Activated CD4-positive, alpha-beta T cell treated with anti-CD3 and anti-CD28 coated beads, Interleukin-2, amount 10 ng/mL, durations not matched to agents 7 days and 5 days (primary cell): ENCODE measurements at regions of chr2 and their contacts with region 1.

Region 1: DNA sequence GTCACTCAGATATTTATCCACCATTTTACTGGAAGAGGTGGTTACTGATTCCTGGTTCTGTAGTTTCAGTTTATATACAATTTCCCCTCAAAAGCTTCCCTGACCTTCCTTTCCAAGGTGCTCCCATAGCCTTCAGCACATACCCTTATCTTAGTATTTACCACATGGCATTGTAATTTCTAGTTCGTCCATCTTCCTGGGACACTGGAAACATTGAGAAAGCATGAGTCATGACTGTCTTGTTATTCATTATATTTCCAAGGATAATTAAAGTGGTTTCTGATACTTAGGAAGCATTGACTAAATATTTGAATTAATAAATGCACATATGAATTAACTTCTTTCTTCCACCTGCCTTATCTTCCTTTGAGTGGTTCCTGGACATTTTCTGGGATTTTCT is 203.8 kb downstream of the ETAA1 start:
- DNase-seq: no peak
- H3K4me3 Mint-ChIP-seq: no peak overlapping the region
- H3K27ac Mint-ChIP-seq: no peak overlapping the region
- H3K4me1 Mint-ChIP-seq: no peaks in the 10 kb centered on the region
- H3K27me3 Mint-ChIP-seq: no peaks in the 10 kb centered on the region

Region 2: DNA sequence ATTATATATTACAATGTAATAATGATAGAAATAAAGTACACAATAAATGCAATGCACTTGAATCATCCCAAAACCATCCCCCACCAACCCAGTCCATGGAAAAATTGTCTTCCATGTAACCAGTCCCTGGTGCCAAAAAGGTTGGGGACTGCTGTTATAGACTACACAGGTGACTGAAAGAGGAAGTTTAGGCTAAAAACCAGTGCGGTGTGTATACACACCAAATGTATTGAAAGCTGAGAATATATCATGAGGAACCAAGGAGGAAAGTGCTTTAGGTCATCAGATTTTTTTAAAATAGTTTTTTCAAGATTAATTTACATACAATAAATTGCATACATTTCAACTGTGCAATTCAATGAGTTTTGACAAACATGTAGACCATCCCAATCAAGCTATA is 482.4 kb after region 1 on chr2:
- CTCF ChIA-PET with region 1: no interaction called
- POLR2A ChIA-PET with region 1: interaction called, 10 read pairs
- DNase-seq: no peak
- H3K4me3 Mint-ChIP-seq: no peak overlapping the region
- H3K27ac Mint-ChIP-seq: no peak overlapping the region
- H3K4me1 Mint-ChIP-seq: no peaks in the 10 kb centered on the region
- H3K27me3 Mint-ChIP-seq: peaks cover 8% of the 10 kb centered on the region

Region 3: DNA sequence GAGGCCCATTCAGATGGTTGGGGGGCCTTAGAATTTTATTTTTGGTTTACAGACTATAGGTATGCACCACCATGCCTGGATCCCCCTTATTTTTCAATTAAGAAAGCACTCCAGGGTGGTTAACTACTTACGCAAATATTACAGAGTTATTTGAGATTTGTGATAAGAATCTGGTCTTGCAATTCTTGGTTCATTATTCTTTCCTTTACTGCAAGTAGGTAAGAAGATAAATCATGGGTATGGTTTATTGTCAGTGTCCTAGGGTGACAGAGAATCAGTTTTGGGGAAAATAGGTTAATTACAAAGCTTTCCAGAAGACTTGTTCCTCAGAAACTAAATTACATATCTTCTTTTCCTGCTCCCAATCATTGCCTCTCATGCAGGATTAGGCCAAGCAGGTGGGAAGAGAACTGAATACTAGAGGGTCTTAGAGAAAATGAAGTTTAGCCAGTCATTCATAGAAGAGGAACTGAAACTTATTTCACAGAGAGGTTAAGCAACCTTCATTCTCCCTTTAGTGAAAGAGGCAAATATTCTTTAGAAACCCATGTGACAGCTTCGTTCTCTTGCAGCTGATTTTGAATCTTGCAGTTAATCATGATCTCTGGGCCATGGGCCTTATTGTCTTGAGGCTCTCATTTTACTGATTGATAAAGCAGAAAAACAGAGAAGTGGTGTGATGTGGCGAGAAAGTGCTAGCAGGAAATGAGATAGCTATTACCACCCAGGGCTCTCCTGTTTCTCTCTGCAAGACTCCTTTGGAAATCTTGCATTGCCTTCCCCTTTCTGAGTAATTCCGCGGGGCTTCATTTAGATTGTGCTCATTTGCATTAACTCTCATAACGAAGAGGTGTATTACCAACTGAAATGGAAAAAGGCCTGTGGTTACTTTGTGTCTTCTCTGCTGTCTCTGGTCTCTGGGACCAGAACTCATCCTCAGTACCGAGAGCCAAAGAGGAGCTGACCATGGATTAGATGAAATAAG is 1088.9 kb after region 1 on chr2:
- CTCF ChIA-PET with region 1: no interaction called
- POLR2A ChIA-PET with region 1: no interaction called
- DNase-seq: peak; percentile 9
- H3K4me3 Mint-ChIP-seq: no peak overlapping the region
- H3K27ac Mint-ChIP-seq: peak overlapping the region; percentile 11
- H3K4me1 Mint-ChIP-seq: peaks cover 22% of the 10 kb centered on the region
- H3K27me3 Mint-ChIP-seq: peaks cover 2% of the 10 kb centered on the region